ENCODE measurements at regions of chr19 and their contacts with region 1.

Region 1: DNA sequence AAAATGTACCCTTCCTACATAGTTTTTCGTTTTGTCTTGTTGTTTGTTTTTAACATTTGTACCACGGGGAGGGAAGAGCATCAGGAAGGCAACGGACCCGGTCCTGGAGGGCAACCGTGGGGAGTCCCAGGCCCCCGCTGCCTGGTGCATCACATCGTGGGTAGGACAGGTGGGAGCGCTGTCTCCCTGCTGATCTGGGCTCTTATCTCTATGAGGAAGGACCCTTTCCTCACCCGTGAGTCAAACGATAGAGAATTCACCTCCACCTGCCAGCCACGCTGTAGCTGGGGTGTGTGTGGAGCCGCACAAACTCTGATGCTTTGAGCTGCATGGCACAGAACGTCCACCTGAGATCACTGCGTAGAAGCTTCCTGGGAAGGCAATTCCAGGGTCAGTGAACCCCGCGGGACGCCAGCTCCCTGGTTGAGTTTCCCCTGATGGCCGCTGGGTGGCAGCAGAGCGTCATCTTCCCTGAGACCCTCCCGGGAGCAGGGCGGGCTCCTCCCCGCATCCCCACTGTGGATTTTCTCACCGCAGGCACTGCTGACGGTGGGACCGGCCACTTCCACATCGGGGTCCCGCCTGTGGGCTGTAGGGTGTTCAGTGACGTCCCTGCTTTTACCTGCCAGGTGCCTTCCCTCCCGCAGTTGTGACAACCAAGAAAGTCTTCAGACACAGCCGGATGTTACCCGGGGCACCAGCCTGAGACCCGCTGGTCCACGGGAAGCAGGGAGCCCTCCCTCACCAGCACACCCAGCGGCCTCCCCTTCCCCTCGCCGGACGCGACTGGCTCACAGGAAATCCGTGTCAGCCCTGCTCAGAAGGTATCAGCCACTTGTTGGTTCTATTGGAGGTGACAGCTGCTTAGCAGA is 54.7 kb downstream of the ZNF787 start:
- DNase-seq: peak; percentile 41
- ATAC-seq: peak; percentile 88
- H3K4me3 ChIP-seq: peak overlapping the region; percentile 24 to 41
- H3K27ac ChIP-seq: no peak overlapping the region
- H3K4me1 ChIP-seq: peaks cover 5% of the 10 kb centered on the region; the same call in 1 of the 2 replicates
- H3K27me3 ChIP-seq: peaks cover 9% of the 10 kb centered on the region
- CTCF ChIP-seq: peak; percentile 99

Region 2: GRCh38 chr19:55857149-55857548 is 209.2 kb before region 1 on chr19:
- CTCF ChIA-PET with region 1: interaction called, 15 read pairs
- POLR2A ChIA-PET with region 1: no interaction called
- in situ Hi-C with region 1: no loop called
- intact Hi-C with region 1: no loop called
- DNase-seq: no peak
- ATAC-seq: no peak
- H3K4me3 ChIP-seq: no peak overlapping the region
- H3K27ac ChIP-seq: no peak overlapping the region
- H3K4me1 ChIP-seq: no peaks in the 10 kb centered on the region
- H3K27me3 ChIP-seq: peaks cover 8% of the 10 kb centered on the region
- CTCF ChIP-seq: no peak

Region 3: DNA sequence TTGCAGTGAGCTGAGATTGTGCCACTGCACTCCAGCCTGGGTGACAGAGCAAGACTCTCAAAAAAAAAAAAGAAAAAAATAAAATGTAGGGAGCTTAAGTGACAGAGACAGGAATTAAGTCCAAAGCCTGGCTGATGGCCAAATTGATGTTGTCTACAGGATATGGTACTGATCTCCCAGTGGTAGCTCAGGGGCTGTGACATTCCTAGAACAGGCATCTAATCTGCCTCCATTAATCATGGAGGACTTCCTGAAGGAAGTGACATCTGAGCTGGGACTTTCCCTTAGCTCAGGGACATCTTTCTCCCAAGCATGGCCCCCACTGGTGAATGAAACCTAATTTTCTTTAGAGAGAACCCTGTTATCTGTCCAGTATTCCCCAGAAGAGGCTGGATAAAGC is 194.8 kb after region 1 on chr19:
- CTCF ChIA-PET with region 1: interaction called, 10 read pairs
- POLR2A ChIA-PET with region 1: no interaction called
- in situ Hi-C with region 1: no loop called
- intact Hi-C with region 1: loop called (anchors 10 kb)
- DNase-seq: no peak
- ATAC-seq: no peak
- H3K4me3 ChIP-seq: no peak overlapping the region
- H3K27ac ChIP-seq: no peak overlapping the region
- H3K4me1 ChIP-seq: no peaks in the 10 kb centered on the region
- H3K27me3 ChIP-seq: no peaks in the 10 kb centered on the region
- CTCF ChIP-seq: no peak